ENCODE measurements at regions of chr11 and their contacts with region 1.

Region 1: DNA sequence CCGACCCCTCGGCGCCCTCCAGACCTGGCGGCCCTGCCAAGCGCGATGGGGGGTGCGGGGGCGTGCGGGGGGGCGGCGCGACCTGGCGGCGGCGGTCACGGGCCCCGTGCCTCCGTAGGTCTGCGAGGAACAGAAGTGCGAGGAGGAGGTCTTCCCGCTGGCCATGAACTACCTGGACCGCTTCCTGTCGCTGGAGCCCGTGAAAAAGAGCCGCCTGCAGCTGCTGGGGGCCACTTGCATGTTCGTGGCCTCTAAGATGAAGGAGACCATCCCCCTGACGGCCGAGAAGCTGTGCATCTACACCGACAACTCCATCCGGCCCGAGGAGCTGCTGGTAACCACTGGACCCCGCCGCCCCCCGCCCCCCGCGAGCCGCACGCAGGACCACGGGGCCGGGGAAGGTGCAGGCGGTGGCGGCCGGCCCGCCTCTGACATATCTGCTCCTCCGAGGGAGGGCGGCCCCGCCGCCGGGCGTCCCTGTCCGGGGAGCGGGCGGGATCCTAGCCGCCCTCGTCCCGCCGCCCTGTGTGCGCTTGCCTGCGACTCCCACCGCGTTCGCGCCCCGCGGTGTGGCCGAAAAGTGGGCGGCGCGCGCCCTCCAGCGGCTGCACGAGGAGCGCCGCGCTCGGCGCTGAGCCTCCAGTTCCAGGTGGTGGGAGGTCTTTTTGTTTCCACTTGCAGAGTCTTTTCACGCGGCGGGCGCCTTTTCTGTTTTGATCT is 2.1 kb downstream of the CCND1 start:
- DNase-seq: peak; percentile 66 to 83
- H3K4me3 ChIP-seq: peak overlapping the region; percentile 99
- H3K27ac ChIP-seq: peak overlapping the region; percentile 85
- H3K4me1 ChIP-seq: peaks cover 22% of the 10 kb centered on the region
- H3K27me3 ChIP-seq: no peaks in the 10 kb centered on the region
- CTCF ChIP-seq: peak; percentile 91

Region 2: DNA sequence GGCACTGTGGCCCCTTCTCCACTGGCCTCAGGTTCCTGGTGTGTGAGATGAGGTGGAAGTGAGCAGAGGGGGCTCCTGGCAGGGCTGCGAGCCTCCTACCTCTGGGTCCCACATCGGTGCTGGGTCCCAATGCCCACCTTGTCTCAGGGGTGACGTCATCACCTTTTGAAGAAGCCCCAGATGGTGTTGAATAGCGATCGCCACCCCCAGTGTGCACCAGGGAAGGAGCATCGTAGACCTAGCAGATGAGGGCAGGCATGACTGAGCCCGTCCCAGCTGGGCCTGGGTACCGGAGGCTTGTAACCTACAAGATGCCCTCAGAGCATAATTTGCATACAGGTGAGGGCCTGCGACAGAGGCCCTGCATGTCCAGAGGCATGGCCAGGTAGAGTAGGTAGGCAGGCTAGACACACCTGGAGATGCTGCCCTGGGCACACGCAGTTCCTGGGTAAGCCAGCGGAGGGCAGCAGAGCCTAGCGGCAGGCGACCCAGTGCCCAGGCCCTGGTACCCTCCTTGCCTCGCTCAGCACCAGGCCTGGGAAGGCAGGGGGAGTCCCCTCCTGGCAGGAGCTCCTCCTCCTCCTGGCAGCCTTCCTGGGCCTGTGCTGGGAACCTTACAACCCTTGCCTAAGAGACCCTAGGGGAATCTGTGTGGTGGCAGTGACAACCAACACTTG is 541.8 kb before region 1 on chr11:
- CTCF ChIA-PET with region 1: interaction called, 4 read pairs
- POLR2A ChIA-PET with region 1: interaction called, 4 read pairs
- intact Hi-C with region 1: loop called (anchors 1 kb)
- DNase-seq: peak; percentile 82 to 91
- H3K4me3 ChIP-seq: no peak overlapping the region
- H3K27ac ChIP-seq: no peak overlapping the region
- H3K4me1 ChIP-seq: peaks cover 26% of the 10 kb centered on the region
- H3K27me3 ChIP-seq: no peaks in the 10 kb centered on the region
- CTCF ChIP-seq: peak; percentile 99

Region 3: DNA sequence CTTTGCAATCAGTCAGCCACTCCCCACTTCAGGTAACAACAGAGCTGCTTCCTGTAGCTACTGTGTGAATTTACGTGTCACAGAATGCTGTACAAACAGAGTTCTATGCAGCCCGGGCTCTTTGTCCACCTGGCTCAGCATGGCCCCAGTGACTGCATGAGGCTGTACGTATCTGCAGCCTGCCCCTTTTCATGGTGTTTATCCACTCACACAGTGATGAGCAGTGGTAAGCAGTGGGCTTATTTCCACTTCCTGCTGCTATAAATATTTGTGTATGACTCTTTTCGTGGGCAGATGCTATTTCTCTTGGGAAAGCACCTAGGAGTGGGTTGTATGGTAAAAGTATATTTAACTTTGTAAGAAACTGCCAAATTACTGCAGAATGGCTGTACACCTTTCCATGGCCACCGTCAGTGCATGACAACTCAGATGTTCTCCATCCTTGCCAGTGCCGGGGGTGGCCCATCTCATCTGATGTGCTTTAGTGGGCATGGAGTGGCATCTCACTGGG is 305.8 kb before region 1 on chr11:
- CTCF ChIA-PET with region 1: no interaction called
- POLR2A ChIA-PET with region 1: interaction called, 30 read pairs
- intact Hi-C with region 1: no loop called
- DNase-seq: peak in 1 of 2 experiments; percentile 36
- H3K4me3 ChIP-seq: no peak overlapping the region
- H3K27ac ChIP-seq: peak overlapping the region; percentile 24
- H3K4me1 ChIP-seq: peaks cover 54% of the 10 kb centered on the region
- H3K27me3 ChIP-seq: no peaks in the 10 kb centered on the region
- CTCF ChIP-seq: no peak

Region 4: DNA sequence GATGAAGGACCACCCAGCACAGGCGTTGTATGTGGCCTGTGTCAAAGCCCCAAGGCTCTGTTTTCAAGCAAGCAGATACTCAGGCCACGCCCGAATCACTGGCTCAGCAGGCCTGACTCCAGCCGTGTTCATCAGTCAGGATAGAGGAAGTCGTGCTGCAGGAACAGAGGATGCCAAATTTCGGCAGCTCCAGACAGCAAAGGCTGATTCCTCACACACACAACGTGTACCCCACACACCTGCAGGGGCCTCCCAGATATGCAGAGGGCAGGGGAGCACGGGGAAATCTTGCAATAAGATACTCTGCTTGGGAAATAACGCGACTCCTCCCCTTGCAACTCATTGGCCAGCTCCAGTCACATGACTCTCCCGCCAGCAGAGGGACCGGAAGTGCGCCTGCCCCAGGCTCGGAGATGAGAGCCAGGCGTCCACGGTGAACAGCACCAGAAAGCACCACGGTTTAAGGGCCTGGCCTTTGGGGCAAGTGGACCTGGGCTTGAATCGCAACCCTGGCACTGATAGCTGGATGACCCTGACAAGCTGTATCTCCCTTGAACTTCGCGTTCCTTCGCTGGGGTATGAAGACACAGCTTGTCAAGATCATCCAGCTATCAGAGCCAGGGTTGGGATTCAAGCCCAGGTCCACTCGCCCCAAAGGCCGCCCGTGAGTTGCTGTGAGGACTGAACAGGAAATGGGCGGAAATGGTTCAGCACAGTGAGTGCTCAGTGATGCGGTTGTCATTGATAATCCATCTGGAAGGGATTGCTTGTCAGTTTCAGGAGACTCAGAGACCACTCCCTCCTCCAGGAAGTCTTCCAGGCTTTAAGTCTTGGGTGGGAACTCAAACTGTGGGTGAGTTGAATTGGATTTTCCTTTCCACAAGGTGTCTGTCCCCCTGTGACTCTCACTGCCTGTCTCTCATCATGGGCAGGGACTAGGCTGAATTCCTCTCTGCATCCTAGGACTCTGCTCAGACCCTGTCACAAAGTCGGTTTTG is 260.6 kb before region 1 on chr11:
- CTCF ChIA-PET with region 1: no interaction called
- POLR2A ChIA-PET with region 1: interaction called, 4 read pairs
- intact Hi-C with region 1: loop called (anchors 1 kb)
- DNase-seq: peak; percentile 82 to 88
- H3K4me3 ChIP-seq: peak overlapping the region; percentile 43; the same call in 1 of the 2 replicates
- H3K27ac ChIP-seq: peak overlapping the region; percentile 59
- H3K4me1 ChIP-seq: peaks cover 30% of the 10 kb centered on the region
- H3K27me3 ChIP-seq: no peaks in the 10 kb centered on the region
- CTCF ChIP-seq: no peak

Region 5: GRCh38 chr11:69436973-69437875 is 205.8 kb before region 1 on chr11:
- CTCF ChIA-PET with region 1: no interaction called
- POLR2A ChIA-PET with region 1: interaction called, 16 read pairs
- intact Hi-C with region 1: loop called (anchors 1 kb)
- DNase-seq: peak; percentile 97 to 100
- H3K4me3 ChIP-seq: no peak overlapping the region
- H3K27ac ChIP-seq: peak overlapping the region; percentile 75
- H3K4me1 ChIP-seq: peaks cover 64% of the 10 kb centered on the region
- H3K27me3 ChIP-seq: no peaks in the 10 kb centered on the region
- CTCF ChIP-seq: peak; percentile 70

Region 6: DNA sequence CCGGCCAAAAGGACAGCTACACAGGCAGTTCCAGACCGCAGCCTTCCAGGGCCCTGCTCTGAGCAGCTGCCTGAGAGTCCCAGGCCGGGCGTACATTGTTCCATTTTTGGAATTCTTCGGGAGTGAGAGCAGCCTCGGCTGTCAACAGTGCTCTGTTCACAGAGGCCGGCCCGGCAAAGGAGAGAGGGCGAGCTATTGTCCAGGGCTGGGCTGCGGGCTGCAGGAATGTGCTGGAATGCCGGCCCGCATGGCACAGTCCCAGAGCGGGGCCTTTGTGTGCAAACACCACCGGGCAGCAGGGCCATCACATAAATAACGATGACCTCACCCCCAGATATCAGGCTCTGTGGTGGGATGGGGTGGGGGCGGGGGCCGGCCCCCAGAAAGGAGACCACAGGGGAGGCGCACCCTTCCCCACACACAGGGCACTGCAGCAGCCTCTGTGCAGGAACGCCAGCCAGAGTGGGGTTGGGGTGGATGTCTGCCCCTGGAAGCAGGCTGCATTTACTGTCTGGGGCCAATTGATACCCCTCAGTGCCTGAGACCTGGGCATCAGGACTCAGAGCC is 145.8 kb before region 1 on chr11:
- CTCF ChIA-PET with region 1: no interaction called
- POLR2A ChIA-PET with region 1: no interaction called
- intact Hi-C with region 1: loop called (anchors 1 kb)
- DNase-seq: peak; percentile 81 to 93
- H3K4me3 ChIP-seq: no peak overlapping the region
- H3K27ac ChIP-seq: no peak overlapping the region
- H3K4me1 ChIP-seq: peaks cover 14% of the 10 kb centered on the region
- H3K27me3 ChIP-seq: peaks cover 18% of the 10 kb centered on the region
- CTCF ChIP-seq: no peak

Region 7: GRCh38 chr11:69540118-69540502 is 103.0 kb before region 1 on chr11:
- CTCF ChIA-PET with region 1: no interaction called
- POLR2A ChIA-PET with region 1: no interaction called
- intact Hi-C with region 1: loop called (anchors 5 kb)
- DNase-seq: peak in 1 of 2 experiments; percentile 80
- H3K4me3 ChIP-seq: no peak overlapping the region
- H3K27ac ChIP-seq: no peak overlapping the region
- H3K4me1 ChIP-seq: no peaks in the 10 kb centered on the region
- H3K27me3 ChIP-seq: 0 out of 2 replicates have a peak, but pooled peaks cover 5% of the 10 kb centered on the region
- CTCF ChIP-seq: no peak

Measured in PC-9 (cell line).